ENCODE measurements at regions of chr17 and their contacts with region 1.

Region 1: GRCh38 chr17:15260376-15261257 is 4.5 kb downstream of the PMP22 start:
- DNase-seq: peak; percentile 92 to 93
- H3K4me3 ChIP-seq: peak overlapping the region; percentile 0 to 76 (median 50)
- H3K27ac ChIP-seq: peak overlapping the region; percentile 92 to 99 (median 95)
- H3K4me1 ChIP-seq: peaks cover 59 to 65% of the 10 kb centered on the region in 2 donors
- H3K27me3 ChIP-seq: no peaks in the 10 kb centered on the region
- CTCF ChIP-seq: peak in 4 of 6 experiments; percentile 81 to 97 (median 96)
- POLR2A ChIP-seq: peak; percentile 21 to 69

Region 2: GRCh38 chr17:15348021-15348420 is 87.4 kb after region 1 on chr17:
- intact Hi-C with region 1: loop called (anchors 5 kb)
- DNase-seq: peak; percentile 28 to 46
- H3K4me3 ChIP-seq: no peak overlapping the region
- H3K27ac ChIP-seq: no peak overlapping the region
- H3K4me1 ChIP-seq: peaks cover 0 to 11% of the 10 kb centered on the region in 2 donors
- H3K27me3 ChIP-seq: no peaks in the 10 kb centered on the region
- CTCF ChIP-seq: no peak
- POLR2A ChIP-seq: no peak

Region 3: DNA sequence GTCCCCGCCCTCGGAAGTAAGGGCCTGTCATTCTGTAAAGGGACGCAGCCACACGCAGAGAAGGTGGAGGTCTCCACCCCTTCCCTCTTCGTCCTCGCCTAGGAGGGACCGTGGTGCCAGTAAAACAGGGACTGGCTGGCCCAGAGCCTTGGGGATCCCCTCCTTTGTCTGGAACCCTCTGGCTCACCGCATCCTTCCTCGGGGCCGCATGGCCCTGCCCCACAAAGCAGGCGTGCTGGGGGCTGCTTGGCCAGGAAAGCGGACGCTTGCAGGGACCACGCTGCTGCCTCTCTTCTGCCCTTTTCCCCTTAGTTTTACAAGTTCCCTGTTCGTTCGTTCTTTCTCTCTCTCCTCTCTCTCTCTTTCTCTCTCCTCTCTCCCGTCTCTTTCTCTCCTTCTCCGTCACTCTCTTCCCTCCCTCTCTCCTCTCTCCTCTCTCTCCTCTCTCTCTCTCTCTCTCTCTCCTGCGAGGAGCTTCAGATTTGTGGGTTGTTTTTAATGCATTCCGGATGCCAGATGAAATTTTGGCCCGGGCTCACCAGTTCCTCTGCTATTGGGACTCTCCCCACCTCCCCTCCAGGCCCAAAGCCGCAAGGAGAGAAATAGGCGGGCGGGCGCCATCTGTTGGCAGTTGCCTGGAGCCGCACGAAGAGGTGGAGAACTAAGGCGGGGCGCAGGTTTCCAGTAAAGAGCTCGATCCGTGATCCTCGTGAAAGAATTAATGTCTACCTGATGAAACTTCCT is 241.9 kb after region 1 on chr17:
- intact Hi-C with region 1: loop called (anchors 2 kb)
- DNase-seq: peak; percentile 94 to 97
- H3K4me3 ChIP-seq: peak overlapping the region in 1 of 3 donors; percentile 10
- H3K27ac ChIP-seq: peak overlapping the region; percentile 80 to 94 (median 92)
- H3K4me1 ChIP-seq: peaks cover 27 to 33% of the 10 kb centered on the region in 2 donors
- H3K27me3 ChIP-seq: no peaks in the 10 kb centered on the region
- CTCF ChIP-seq: peak; percentile 36 to 97 (median 86)
- POLR2A ChIP-seq: no peak

Measured in thyroid gland (tissue), 4 donors.